Aorta (tissue), 5 donors: ENCODE measurements at regions of chr11 and their contacts with region 1.

Region 1: GRCh38 chr11:7513234-7514098 is at the start of gene PPFIBP2:
- DNase-seq: peak; percentile 91 to 95
- ATAC-seq: peak; percentile 96
- H3K4me3 ChIP-seq: peak within 1 kb of the TSS; percentile 38 to 87
- H3K27ac ChIP-seq: peak within 1 kb of the TSS; percentile 71 to 96
- H3K4me1 ChIP-seq: peaks cover 0 to 3% of the 10 kb centered on the region in 2 donors
- H3K27me3 ChIP-seq: no peaks in the 10 kb centered on the region
- total RNA-seq, gene PPFIBP2: 17.6 to 35.6 TPM

Region 2: DNA sequence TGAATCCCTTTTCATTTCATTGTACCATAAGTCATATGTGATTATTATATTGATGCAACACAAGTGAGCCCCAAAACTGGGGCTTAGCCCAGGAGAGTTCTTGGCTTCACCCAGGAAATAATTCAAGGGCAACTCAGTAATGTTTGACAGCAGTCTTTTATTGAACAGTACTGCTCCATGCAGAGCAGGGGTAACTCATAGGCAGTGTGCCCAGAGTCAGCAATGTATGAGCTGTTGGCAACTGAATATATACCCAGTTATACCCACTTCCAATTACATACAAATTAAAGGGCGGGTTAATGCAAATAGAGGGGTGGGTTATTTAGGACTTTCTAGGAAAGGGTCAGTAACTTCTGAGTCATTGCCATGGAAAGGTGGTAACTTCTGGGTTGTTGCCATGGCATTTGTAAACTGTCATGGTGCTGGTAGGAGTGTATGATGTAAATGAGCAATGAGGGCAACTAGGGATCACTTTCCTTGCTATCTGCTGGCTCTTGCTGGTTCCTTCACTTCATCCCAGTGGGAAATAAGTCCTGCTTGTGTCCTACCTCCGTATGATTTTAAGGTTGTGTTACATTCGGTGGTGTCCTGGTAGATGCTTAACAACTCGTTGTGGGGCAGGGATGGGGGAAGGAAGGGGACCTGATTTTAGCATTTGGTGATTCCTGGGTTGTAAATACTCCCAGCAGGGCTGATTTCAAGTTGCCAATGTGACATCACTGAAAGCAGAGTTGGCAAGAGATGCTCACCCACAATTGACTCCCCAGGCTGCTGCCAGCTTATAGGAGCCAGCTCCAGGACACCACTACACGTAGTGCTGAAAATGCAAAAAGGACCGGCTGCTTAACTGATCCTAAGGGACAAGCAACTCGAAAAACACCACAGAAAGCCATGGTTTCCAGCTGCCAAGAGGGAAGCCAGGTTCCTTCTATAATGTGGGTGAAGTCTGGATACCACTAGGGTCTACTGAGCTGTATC is 191.7 kb before region 1 on chr11:
- intact Hi-C with region 1: no loop called
- DNase-seq: no peak
- ATAC-seq: no peak
- H3K4me3 ChIP-seq: no peak overlapping the region
- H3K27ac ChIP-seq: no peak overlapping the region
- H3K4me1 ChIP-seq: no peaks in the 10 kb centered on the region
- H3K27me3 ChIP-seq: no peaks in the 10 kb centered on the region

Region 3: GRCh38 chr11:7548659-7549274 is 35.3 kb after region 1 on chr11:
- intact Hi-C with region 1: no loop called
- DNase-seq: no peak
- ATAC-seq: peak; percentile 20
- H3K4me3 ChIP-seq: no peak overlapping the region
- H3K27ac ChIP-seq: no peak overlapping the region
- H3K4me1 ChIP-seq: no peaks in the 10 kb centered on the region
- H3K27me3 ChIP-seq: no peaks in the 10 kb centered on the region

Region 4: DNA sequence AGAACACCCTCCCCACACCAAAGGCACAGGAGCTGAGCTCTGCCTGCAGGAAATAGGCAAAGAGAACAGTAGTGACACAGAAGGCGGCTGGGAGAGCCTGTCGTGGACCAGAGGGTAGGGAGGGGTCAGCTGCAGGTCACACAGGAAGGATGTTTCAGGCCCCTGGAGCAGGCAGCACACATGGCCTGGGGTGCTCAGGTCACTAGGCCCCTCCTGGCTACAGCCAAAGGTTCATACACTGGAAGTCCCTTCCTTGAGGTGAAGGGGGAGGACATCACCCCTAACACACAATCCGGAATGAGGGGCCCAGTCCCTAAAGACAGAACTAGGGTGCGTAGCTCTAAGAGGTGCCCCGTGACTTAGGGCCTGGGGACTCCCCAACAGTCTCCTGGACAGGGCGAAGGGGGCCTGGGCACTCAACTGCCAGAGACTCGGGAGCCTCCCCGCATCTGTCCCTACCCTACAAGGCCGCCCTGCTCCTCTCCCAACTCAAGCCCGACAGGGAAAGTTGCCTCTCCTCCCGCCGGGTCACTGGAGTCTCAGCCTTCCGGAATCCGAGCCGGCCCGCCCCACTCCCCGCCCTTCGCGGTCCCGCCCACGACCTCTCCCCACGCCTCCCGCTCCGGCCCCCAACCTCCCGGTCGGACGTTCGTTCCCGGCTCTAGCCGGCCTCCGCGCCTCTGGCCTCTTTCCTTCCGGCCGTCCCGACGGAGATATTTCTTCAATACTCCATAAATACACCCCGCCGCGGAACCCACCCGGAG is 159.7 kb after region 1 on chr11 and contains the start of gene CYB5R2:
- intact Hi-C with region 1: loop called (anchors 5 kb)
- DNase-seq: peak; percentile 87 to 94
- ATAC-seq: peak; percentile 88
- H3K4me3 ChIP-seq: peak within 1 kb of the TSS; percentile 60 to 80
- H3K27ac ChIP-seq: peak within 1 kb of the TSS in 1 of 2 donors; percentile 43
- H3K4me1 ChIP-seq: no peaks in the 10 kb centered on the region
- H3K27me3 ChIP-seq: no peaks in the 10 kb centered on the region
- total RNA-seq, gene CYB5R2: 8.3 to 10.1 TPM